ENCODE measurements at regions of chr10 and their contacts with region 1.

Region 1: DNA sequence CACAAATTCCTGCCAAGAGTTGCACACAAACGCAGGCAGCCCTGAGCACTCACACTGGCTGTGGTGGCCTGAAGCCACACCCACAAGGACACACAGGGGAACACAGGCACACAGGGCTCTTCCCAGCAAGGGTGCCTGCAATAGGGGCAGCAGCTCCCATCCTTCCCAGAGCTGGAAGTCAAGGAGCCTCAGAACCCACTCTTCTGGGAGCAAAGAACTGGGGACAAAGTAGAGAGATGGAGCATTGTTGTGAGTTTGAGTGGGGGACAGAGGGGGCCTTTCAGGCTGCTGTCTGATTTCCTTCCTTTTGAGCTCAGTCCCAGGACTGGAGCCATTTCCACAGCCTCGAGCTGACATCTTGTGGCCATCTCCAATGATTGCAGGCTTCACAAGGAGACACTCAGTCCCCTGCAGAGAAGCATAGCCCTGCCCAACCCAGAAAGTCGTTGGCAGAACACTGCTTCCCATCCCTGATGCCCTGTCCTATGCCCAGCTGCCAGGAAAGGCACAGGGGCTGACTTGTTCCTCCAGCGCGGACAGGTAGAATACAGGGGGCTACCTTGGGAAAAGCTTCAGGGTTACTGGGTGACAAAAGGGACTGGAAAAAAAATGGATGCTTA is 34.4 kb upstream of the SLF2 start:
- DNase-seq: peak; percentile 75
- ATAC-seq: peak; percentile 86
- H3K4me3 Mint-ChIP-seq: no peak overlapping the region
- H3K27ac Mint-ChIP-seq: no peak overlapping the region
- H3K4me1 Mint-ChIP-seq: peaks cover 31% of the 10 kb centered on the region
- H3K27me3 Mint-ChIP-seq: peaks cover 28% of the 10 kb centered on the region
- CTCF ChIP-seq: peak; percentile 30

Region 2: DNA sequence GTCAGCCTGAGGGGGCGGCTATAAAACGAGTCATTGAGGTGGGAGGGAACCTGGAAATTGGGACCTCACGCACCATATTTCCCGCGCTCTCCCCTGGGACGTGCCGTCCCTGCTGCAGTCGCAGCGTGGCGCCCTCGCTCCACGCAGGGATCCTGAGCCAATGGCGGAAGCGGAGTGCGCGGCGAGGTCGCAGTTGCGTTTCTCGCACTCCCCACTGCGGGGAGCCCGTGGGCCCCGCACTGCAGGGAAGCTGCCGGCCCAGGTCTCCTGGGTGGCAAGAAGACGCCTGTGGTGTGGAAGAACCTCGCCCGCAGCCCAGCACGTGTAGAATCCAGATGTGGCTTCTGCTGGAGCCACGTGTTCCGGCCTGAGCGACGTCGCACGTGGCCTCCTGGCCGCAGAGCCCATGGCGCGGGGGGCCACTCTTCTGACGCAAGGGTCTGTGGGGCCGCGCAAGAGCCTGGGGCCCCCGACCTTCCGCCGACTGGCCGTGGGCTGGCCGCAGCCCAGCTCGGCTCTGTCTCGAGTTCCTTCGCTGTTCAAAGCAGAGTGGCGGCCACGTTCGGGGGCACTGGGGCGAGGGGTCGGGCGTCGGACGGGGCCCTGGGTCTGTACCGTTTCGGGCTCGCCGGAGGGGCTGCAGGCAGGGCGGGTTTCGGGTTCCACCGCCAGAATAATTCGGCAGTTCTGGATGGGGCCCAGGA is 316.2 kb before region 1 on chr10:
- CTCF ChIA-PET with region 1: interaction called, 107 read pairs
- POLR2A ChIA-PET with region 1: interaction called, 5 read pairs
- DNase-seq: peak; percentile 73
- ATAC-seq: peak; percentile 64
- H3K4me3 Mint-ChIP-seq: no peak overlapping the region
- H3K27ac Mint-ChIP-seq: no peak overlapping the region
- H3K4me1 Mint-ChIP-seq: peaks cover 9% of the 10 kb centered on the region; the same call in 1 of the 2 replicates
- H3K27me3 Mint-ChIP-seq: peaks cover 51% of the 10 kb centered on the region
- CTCF ChIP-seq: peak; percentile 67; the same call in 1 of the 2 replicates

Region 3: GRCh38 chr10:100728928-100729861 is 149.2 kb before region 1 on chr10:
- CTCF ChIA-PET with region 1: interaction called, 15 read pairs
- POLR2A ChIA-PET with region 1: no interaction called
- DNase-seq: peak; percentile 80
- ATAC-seq: peak; percentile 61
- H3K4me3 Mint-ChIP-seq: peak overlapping the region; percentile 53
- H3K27ac Mint-ChIP-seq: no peak overlapping the region
- H3K4me1 Mint-ChIP-seq: peaks cover 40% of the 10 kb centered on the region
- H3K27me3 Mint-ChIP-seq: peaks cover 100% of the 10 kb centered on the region
- CTCF ChIP-seq: peak; percentile 23; the same call in 1 of the 2 replicates

Region 4: DNA sequence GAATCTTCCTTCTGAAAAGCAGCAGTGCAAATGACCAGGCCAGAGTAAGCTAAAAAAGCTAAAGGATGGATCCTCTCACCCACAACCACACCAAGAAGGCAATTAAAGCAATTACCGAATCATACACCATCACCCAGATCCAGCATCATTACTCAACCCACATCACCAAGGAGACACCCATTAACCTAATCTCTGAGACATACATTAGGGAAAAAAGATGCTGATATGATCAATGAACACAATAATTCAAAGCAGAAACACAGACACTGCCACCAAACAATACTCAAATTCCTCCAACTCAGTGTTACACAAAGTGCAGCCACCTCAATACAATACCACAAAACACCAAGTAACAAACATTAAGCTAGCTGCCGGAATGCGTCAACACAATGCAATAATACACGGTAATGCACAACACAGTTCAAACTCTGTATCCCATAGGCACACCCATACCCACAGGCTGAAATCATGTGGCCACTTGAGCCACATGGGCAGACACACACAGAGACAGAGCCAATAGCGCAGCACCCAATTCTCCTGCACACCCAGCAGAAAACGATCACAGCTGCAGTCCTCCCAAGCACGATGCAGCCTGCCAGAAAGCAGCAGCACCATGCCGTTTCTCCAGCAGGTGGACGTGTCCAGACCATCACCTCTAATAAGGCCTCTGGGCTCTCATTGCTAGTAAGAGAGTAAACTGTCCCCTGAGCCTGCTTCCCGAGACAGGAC is 111.5 kb before region 1 on chr10:
- CTCF ChIA-PET with region 1: interaction called, 16 read pairs
- POLR2A ChIA-PET with region 1: no interaction called
- DNase-seq: no peak
- ATAC-seq: peak; percentile 76
- H3K4me3 Mint-ChIP-seq: no peak overlapping the region
- H3K27ac Mint-ChIP-seq: no peak overlapping the region
- H3K4me1 Mint-ChIP-seq: no peaks in the 10 kb centered on the region
- H3K27me3 Mint-ChIP-seq: peaks cover 33% of the 10 kb centered on the region
- CTCF ChIP-seq: no peak

Region 5: GRCh38 chr10:100817268-100817839 is 61.0 kb before region 1 on chr10:
- CTCF ChIA-PET with region 1: interaction called, 21 read pairs
- POLR2A ChIA-PET with region 1: no interaction called
- DNase-seq: peak; percentile 72
- ATAC-seq: peak; percentile 97
- H3K4me3 Mint-ChIP-seq: no peak overlapping the region
- H3K27ac Mint-ChIP-seq: no peak overlapping the region
- H3K4me1 Mint-ChIP-seq: peaks cover 24% of the 10 kb centered on the region
- H3K27me3 Mint-ChIP-seq: peaks cover 32% of the 10 kb centered on the region
- CTCF ChIP-seq: 0 out of 2 replicates have a peak, but pooled peaks have one; percentile 18

Region 6: DNA sequence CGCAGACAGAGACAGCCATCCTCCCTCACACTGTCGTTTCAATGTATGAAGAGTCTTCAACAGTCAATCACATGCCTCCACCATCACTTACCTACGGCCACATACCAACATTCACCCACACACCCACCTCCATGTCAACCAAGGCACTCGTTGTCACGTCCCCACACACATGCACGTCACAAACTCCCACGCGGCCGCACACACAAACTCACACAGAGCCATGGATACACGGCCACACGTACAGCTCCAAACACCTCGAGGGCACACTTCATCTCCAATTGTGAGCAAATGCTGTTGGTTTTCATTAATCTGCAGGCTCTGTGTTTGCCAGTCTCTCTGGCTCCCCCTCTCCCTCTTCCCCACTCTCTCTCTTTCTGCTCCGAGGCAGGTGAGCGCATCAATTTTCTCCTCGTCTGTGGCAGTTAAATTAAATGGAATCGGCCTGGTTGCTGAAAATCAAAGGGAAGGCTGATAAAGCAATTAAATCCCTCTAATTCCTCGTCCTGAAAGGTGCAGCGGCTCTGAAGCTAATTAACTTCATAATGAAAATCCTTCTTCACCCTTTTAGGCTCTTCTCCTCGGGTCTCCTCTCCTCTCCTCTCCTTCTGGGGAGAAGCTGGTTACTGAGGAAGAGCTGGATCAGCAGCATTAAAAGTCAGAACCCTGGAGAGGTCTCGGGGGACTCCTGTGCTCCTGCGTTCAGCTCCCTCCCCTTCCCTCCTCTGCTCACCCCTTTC is 19.5 kb before region 1 on chr10:
- CTCF ChIA-PET with region 1: interaction called, 34 read pairs
- POLR2A ChIA-PET with region 1: no interaction called
- DNase-seq: no peak
- ATAC-seq: no peak
- H3K4me3 Mint-ChIP-seq: no peak overlapping the region
- H3K27ac Mint-ChIP-seq: no peak overlapping the region
- H3K4me1 Mint-ChIP-seq: no peaks in the 10 kb centered on the region
- H3K27me3 Mint-ChIP-seq: peaks cover 67% of the 10 kb centered on the region
- CTCF ChIP-seq: no peak

Region 7: DNA sequence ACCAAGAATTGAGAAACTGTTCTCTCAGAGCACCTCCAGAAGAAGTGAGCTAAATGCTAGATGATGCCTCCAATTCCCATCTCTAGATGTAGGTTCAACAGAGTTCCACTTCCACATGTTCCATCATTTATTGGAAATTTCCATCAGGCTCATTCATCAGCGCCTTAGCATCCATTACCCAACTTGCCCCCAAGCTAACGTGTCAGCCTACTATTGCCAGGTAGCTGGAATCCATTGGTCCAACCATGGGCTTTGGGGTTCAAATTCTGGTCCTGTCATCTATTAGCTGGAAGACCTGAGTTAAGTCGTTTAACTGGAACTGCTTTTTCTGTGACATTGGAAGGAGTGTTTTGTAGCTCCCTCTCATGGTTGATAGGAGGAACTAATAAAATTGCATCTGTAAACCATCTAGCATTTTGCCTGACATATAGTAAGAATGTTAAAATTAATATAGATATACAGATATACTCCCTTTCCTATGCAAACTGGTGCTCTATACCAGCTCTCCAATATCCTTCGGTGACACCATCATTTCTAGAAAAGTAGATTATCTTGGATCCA is 10.5 kb after region 1 on chr10:
- CTCF ChIA-PET with region 1: interaction called, 73 read pairs
- POLR2A ChIA-PET with region 1: no interaction called
- DNase-seq: no peak
- ATAC-seq: peak; percentile 27; the same call in 1 of the 2 replicates
- H3K4me3 Mint-ChIP-seq: no peak overlapping the region
- H3K27ac Mint-ChIP-seq: no peak overlapping the region
- H3K4me1 Mint-ChIP-seq: peaks cover 14% of the 10 kb centered on the region
- H3K27me3 Mint-ChIP-seq: peaks cover 6% of the 10 kb centered on the region; the same call in 1 of the 2 replicates
- CTCF ChIP-seq: no peak

Region 8: DNA sequence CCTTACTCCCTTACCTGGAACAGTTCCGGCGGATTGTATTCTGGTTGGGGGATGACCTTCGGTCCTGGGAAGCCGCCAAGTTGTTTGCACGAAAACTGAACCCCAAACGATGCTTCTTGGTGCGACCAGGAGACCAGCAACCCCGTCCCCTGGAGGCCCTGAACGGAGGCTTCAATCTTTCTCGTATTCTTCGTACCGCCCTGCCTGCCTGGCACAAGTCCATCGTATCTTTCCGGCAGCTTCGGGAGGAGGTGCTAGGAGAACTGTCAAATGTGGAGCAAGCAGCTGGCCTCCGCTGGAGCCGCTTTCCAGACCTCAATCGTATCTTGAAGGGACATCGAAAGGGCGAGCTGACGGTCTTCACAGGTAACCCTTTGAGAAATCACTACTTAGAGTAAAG is 110.7 kb after region 1 on chr10:
- CTCF ChIA-PET with region 1: no interaction called
- POLR2A ChIA-PET with region 1: no interaction called
- DNase-seq: no peak
- ATAC-seq: no peak
- H3K4me3 Mint-ChIP-seq: peak overlapping the region; percentile 93
- H3K27ac Mint-ChIP-seq: no peak overlapping the region
- H3K4me1 Mint-ChIP-seq: peaks cover 13% of the 10 kb centered on the region
- H3K27me3 Mint-ChIP-seq: no peaks in the 10 kb centered on the region
- CTCF ChIP-seq: no peak

Measured in WTC11 (cell line).